ENCODE measurements at regions of chr10 and their contacts with region 1.

Region 1: DNA sequence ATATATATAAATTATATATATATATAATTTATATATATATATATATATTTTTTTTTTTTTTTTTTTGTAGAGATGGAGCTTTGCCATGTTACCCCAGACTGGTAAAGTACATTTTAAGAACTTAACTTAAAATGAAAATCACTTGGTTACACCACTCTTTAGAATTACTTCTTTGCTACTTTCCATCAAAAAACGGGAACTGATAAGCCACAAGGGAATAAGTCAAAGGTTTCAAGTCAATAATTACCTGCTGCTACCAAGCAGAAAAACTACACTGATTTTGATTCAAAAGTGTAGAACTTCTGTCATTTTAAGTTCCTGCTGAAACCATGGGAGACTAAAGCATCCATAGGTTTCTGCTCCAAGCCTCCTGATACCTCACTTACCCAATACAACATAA is 12.2 kb downstream of the PPA1 start:
- DNase-seq: no peak
- ATAC-seq: no peak
- H3K4me3 Mint-ChIP-seq: no peak overlapping the region
- H3K27ac Mint-ChIP-seq: peak overlapping the region; percentile 47
- H3K4me1 Mint-ChIP-seq: peaks cover 31% of the 10 kb centered on the region
- H3K27me3 Mint-ChIP-seq: no peaks in the 10 kb centered on the region
- CTCF ChIP-seq: no peak

Region 2: GRCh38 chr10:70233109-70233938 is 12.3 kb after region 1 on chr10 and contains the start of gene PPA1:
- CTCF ChIA-PET with region 1: interaction called, 52 read pairs
- POLR2A ChIA-PET with region 1: interaction called, 14 read pairs
- intact Hi-C with region 1: no loop called
- DNase-seq: peak; percentile 99
- ATAC-seq: peak; percentile 94
- H3K4me3 Mint-ChIP-seq: peak within 1 kb of the TSS; percentile 80
- H3K27ac Mint-ChIP-seq: peak within 1 kb of the TSS; percentile 94
- H3K4me1 Mint-ChIP-seq: peaks cover 42% of the 10 kb centered on the region
- H3K27me3 Mint-ChIP-seq: no peaks in the 10 kb centered on the region
- CTCF ChIP-seq: no peak
- total RNA-seq, gene PPA1: 357 to 368 TPM

Region 3: GRCh38 chr10:70272925-70273316 is 51.9 kb after region 1 on chr10:
- CTCF ChIA-PET with region 1: interaction called, 26 read pairs
- POLR2A ChIA-PET with region 1: interaction called, 3 read pairs
- intact Hi-C with region 1: no loop called
- DNase-seq: peak; percentile 20
- ATAC-seq: peak; percentile 91
- H3K4me3 Mint-ChIP-seq: no peak overlapping the region
- H3K27ac Mint-ChIP-seq: peak overlapping the region; percentile 52
- H3K4me1 Mint-ChIP-seq: peaks cover 14% of the 10 kb centered on the region
- H3K27me3 Mint-ChIP-seq: no peaks in the 10 kb centered on the region
- CTCF ChIP-seq: peak; percentile 72

Region 4: GRCh38 chr10:70312972-70313371 is 91.9 kb after region 1 on chr10:
- CTCF ChIA-PET with region 1: no interaction called
- POLR2A ChIA-PET with region 1: no interaction called
- intact Hi-C with region 1: no loop called
- DNase-seq: no peak
- ATAC-seq: no peak
- H3K4me3 Mint-ChIP-seq: no peak overlapping the region
- H3K27ac Mint-ChIP-seq: no peak overlapping the region
- H3K4me1 Mint-ChIP-seq: no peaks in the 10 kb centered on the region
- H3K27me3 Mint-ChIP-seq: no peaks in the 10 kb centered on the region
- CTCF ChIP-seq: no peak

Region 5: DNA sequence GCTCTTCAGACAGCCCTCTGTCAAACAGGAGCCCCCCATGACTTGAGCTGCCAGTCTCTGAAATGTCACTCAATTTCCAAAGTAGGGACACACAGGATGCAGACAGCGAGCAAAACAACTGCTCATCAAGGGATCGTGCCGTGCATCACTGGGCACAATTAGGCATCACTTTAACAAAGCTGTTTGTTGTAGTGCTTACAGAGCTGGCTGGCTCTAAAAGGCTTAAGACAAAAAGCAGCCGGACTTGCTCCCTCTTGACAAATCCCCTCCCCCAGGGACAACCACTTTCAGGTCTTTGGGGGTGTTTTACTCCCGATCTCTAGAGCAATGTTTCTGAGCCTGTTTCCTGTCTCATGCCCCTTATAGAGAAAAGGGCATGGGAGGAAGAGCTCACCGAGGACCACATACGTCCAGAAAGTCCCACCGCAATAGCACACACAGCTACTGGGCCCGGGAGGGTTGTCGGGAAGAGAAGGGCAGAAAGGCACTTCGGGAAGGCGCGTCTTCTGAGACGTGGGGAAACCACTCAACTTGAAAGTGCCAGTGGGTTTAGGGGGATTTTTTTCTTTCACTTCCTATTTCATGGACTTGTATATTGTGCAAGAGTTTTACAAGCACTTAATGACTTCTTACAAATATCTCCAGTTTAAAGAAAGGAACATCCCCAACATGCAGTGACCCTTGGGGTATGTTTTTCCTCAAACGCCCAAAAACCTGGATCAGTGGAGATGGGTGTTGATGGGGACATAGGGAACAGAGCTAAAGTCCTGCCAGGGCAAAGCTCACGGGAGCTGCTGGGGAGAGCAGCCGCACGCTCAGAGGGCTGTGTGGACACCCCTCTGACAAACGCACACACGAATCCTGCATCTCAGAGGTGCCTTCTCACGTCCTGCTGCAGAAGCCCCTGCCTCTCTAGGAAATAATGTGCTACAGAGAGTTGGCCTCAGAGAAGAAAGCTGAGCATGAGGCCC is 134.3 kb after region 1 on chr10:
- CTCF ChIA-PET with region 1: interaction called, 321 read pairs
- POLR2A ChIA-PET with region 1: no interaction called
- intact Hi-C with region 1: no loop called
- DNase-seq: peak; percentile 40
- ATAC-seq: peak; percentile 77
- H3K4me3 Mint-ChIP-seq: peak overlapping the region; percentile 64
- H3K27ac Mint-ChIP-seq: peak overlapping the region; percentile 73
- H3K4me1 Mint-ChIP-seq: peaks cover 20% of the 10 kb centered on the region
- H3K27me3 Mint-ChIP-seq: no peaks in the 10 kb centered on the region
- CTCF ChIP-seq: no peak

Region 6: DNA sequence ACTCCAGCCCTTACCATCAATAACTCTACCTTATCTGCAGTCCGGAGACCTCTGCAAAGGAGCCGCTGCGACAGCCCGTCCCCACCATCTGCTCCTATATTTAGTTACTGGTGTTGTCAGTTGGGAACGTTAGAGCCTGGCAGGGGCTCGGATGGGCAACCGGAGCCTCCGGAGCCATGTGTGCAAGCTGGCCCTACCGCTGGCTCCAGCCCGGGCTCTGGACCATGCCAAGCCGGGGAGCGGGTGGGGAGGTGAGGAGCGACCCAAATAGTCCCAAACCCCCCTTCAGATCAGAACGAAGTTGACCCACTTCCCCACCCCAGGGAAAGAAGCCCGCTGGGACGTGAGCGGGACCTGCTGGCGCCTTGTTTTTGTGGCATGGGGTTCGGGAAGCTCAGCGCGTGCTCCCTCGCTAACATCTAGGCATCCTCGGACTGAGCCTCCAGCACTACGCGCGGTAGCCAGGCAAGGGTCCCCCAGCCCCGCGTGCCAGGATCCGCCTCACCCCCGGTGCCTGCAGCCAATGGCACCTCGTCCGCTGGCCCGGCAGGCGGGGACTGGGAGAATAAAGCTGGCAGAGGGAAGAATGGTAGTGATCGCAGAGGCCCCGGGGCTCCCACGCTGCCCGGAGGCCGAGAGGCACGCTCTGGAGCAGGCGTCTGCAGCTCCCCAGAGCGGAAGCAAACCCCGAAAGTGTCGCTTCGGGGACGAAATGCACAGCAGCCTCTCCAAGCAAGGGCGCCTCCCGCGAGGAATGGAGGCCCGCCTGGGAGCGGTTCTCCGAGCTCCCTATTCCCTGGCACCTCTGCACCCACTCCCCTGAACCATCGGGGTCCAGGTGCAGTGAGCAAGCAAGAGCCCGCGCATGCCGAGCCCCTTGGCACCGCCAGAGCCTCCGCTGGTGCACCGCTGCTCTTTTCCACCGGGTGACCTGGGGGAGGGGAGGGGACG is 160.7 kb after region 1 on chr10:
- CTCF ChIA-PET with region 1: interaction called, 12 read pairs
- POLR2A ChIA-PET with region 1: interaction called, 4 read pairs
- intact Hi-C with region 1: no loop called
- DNase-seq: peak; percentile 51
- ATAC-seq: peak; percentile 42
- H3K4me3 Mint-ChIP-seq: peak overlapping the region; percentile 84
- H3K27ac Mint-ChIP-seq: peak overlapping the region; percentile 32
- H3K4me1 Mint-ChIP-seq: peaks cover 3% of the 10 kb centered on the region
- H3K27me3 Mint-ChIP-seq: no peaks in the 10 kb centered on the region
- CTCF ChIP-seq: peak; percentile 31

Region 7: GRCh38 chr10:70404036-70404786 is 183.2 kb after region 1 on chr10 and contains the start of gene EIF4EBP2:
- CTCF ChIA-PET with region 1: interaction called, 10 read pairs
- POLR2A ChIA-PET with region 1: no interaction called
- intact Hi-C with region 1: no loop called
- DNase-seq: peak; percentile 98
- ATAC-seq: peak; percentile 96
- H3K4me3 Mint-ChIP-seq: peak within 1 kb of the TSS; percentile 92
- H3K27ac Mint-ChIP-seq: peak within 1 kb of the TSS; percentile 91
- H3K4me1 Mint-ChIP-seq: peaks cover 36% of the 10 kb centered on the region
- H3K27me3 Mint-ChIP-seq: no peaks in the 10 kb centered on the region
- CTCF ChIP-seq: no peak
- total RNA-seq, gene EIF4EBP2: 23.5 to 24.0 TPM

Region 8: GRCh38 chr10:70528726-70529362 is 307.8 kb after region 1 on chr10:
- CTCF ChIA-PET with region 1: no interaction called
- POLR2A ChIA-PET with region 1: no interaction called
- intact Hi-C with region 1: no loop called
- DNase-seq: peak; percentile 16
- ATAC-seq: peak; percentile 62
- H3K4me3 Mint-ChIP-seq: no peak overlapping the region
- H3K27ac Mint-ChIP-seq: no peak overlapping the region
- H3K4me1 Mint-ChIP-seq: no peaks in the 10 kb centered on the region
- H3K27me3 Mint-ChIP-seq: no peaks in the 10 kb centered on the region
- CTCF ChIP-seq: no peak